AG04449 (cell line): ENCODE measurements at regions of chr17 and their contacts with region 1.

Region 1: GRCh38 chr17:2386400-2387085 is 14.3 kb downstream of the MNT start:
- DNase-seq: no peak
- H3K4me3 ChIP-seq: no peak overlapping the region
- CTCF ChIP-seq: no peak

Region 2: DNA sequence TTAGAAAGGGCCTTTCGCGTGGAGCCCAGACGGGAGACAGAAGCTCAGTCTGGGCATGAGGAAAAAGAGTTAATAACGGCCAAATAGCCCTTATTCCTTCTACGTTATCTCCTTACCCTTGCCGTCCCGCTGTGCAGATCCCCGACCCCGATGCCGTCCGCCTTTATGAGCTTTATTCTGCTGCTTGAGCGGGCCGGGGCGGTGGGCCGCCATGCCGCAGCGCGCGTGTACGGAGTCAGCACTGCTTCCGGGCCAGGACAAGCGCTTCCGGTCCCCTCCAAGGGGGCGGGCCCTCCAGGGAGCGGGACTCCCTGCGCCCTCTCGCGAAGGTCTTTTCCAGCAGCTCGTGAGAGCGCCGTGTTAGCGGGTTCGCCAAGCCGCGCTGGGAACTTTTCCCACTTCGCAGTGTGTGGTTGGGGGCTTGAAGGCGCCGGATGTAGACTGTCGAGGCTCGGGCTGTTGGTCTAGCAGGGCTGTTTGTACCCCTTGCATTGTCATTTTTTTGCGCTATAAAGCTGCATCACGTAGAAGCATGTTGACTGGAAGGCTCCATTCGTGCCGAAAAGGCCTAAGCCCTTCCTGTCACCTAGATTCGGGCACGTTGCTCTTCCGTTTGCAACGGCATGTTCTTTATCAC is 50.2 kb before region 1 on chr17 and contains the start of gene TSR1:
- CTCF ChIA-PET with region 1: interaction called, 13 read pairs
- POLR2A ChIA-PET with region 1: interaction called, 3 read pairs
- DNase-seq: peak; percentile 28
- H3K4me3 ChIP-seq: peak within 1 kb of the TSS; percentile 93
- CTCF ChIP-seq: peak; percentile 58

Region 3: DNA sequence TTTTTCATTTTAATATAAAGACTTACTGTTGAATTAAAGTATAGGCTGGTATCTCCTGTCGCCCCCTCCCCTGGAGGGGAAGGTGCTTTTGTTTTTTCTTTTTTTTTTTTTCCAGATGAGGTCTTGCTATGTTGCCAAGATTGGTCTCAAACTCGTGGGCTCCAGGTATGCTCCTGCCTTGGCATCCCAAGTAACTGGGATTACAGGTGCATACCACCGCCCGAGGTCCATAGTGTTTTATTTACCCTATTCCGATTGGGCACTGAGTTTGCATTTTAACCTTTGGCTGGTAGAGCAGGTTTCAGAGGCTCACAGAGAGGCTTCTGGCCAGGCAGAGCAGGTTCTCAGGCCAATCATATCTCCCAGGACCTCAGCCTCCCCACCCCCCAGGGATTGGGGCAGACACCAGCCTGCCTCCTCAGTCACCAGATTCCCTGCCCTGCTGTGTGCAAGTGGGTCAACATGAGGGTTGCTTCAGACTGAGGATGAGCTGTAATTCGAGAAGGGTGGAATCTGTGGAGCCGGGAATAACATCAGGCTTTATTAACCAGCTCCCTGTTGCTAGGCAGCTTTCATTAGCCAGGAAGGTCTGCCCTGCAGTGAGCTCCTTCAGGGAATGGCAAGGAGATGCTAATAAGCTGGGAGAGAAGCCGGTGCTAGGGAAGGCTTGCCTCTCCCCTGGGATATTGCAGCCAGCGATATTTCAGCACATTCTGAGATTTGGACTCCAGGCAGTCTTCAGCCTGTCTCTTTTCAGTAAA is 38.8 kb before region 1 on chr17:
- CTCF ChIA-PET with region 1: interaction called, 23 read pairs
- POLR2A ChIA-PET with region 1: no interaction called
- DNase-seq: peak; percentile 78
- H3K4me3 ChIP-seq: no peak overlapping the region
- CTCF ChIP-seq: no peak

Region 4: GRCh38 chr17:2361010-2361760 is 25.4 kb before region 1 on chr17:
- CTCF ChIA-PET with region 1: interaction called, 20 read pairs
- POLR2A ChIA-PET with region 1: no interaction called
- DNase-seq: no peak
- H3K4me3 ChIP-seq: no peak overlapping the region
- CTCF ChIP-seq: no peak

Region 5: DNA sequence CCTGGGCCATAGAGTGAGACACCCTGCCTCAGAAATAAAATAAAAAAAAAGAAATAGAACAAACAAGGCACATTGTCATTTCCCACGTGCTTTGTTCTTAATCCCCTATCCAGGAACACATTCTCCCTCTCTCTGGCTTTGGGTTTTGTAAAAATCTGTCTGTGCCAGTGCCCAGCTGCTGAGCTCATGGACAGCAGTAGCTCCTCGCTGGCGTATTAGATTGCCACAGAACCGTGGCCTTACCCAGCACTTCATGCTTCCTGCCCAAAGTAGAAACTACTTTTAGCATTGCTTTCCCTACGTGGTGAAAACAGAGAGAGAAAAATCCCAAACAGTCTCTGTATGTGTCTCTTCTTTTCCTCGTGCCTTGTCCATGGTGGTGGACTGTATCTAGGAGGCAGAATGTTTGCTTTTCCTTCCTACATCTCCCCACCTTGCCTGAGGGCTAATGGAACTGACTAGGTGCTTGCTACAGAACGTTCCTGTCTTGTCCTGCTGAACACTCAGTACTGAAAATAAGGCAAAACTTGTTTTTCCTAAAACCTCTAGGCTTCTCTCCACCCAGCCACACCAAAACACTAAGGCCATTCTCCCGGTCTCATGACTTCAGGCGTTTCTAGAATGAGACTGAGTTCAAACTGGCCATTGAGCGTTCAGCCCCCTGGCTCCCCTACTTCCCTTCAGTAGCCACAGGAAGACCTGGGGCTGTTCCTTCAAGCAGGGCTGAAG is 11.8 kb before region 1 on chr17:
- CTCF ChIA-PET with region 1: interaction called, 91 read pairs
- POLR2A ChIA-PET with region 1: interaction called, 4 read pairs
- DNase-seq: no peak
- H3K4me3 ChIP-seq: no peak overlapping the region
- CTCF ChIP-seq: no peak

Region 6: GRCh38 chr17:2401426-2402221 is 15.1 kb after region 1 on chr17:
- CTCF ChIA-PET with region 1: interaction called, 871 read pairs
- POLR2A ChIA-PET with region 1: interaction called, 17 read pairs
- DNase-seq: peak; percentile 97
- H3K4me3 ChIP-seq: peak overlapping the region; percentile 67
- CTCF ChIP-seq: no peak